ENCODE measurements at regions of chr3 and their contacts with region 1.

Region 1: DNA sequence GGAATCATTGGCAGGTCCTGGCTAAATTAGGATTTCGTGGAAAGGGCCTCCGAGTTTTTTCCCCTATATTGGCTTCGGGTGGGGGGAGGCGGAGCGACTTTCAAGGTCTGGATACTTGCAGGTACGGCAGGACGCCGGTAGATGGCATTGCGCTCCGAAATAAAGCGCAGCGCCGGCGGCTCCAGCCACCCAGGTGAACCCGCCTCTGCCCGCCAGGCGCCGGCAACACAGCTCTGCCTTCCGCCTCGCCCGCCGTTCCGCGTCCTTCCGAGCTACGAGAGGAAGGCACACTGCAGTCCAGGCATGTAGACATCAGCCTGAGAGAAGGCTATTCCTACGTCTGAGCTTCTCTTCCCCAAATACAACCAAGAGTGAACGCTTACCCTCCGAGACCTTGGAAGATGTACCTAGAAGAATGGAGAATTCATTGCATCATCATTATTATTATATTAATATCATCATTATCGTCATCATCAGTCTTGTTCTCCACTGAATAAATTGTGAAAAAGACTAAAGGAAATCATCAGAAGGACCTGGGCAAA is 514.1 kb downstream of the MECOM start:
- DNase-seq: peak; percentile 85
- H3K4me3 ChIP-seq: no peak overlapping the region
- H3K27ac ChIP-seq: no peak overlapping the region
- H3K4me1 ChIP-seq: no peaks in the 10 kb centered on the region
- H3K27me3 ChIP-seq: no peaks in the 10 kb centered on the region
- CTCF ChIP-seq: peak; percentile 50 to 95 (median 90)
- POLR2A ChIP-seq: no peak

Region 2: GRCh38 chr3:169218314-169218983 is 69.0 kb after region 1 on chr3:
- intact Hi-C with region 1: loop called (anchors 10 kb)
- DNase-seq: peak; percentile 8
- H3K4me3 ChIP-seq: no peak overlapping the region
- H3K27ac ChIP-seq: no peak overlapping the region
- H3K4me1 ChIP-seq: no peaks in the 10 kb centered on the region
- H3K27me3 ChIP-seq: no peaks in the 10 kb centered on the region
- CTCF ChIP-seq: peak in 3 of 4 experiments; percentile 23 to 63 (median 57)
- POLR2A ChIP-seq: no peak

Region 3: GRCh38 chr3:169348929-169349613 is 199.7 kb after region 1 on chr3:
- intact Hi-C with region 1: loop called (anchors 2 kb)
- DNase-seq: no peak
- H3K4me3 ChIP-seq: no peak overlapping the region
- H3K27ac ChIP-seq: no peak overlapping the region
- H3K4me1 ChIP-seq: no peaks in the 10 kb centered on the region
- H3K27me3 ChIP-seq: no peaks in the 10 kb centered on the region
- CTCF ChIP-seq: no peak
- POLR2A ChIP-seq: no peak

Region 4: GRCh38 chr3:169542331-169542751 is 392.9 kb after region 1 on chr3:
- intact Hi-C with region 1: no loop called
- DNase-seq: no peak
- H3K4me3 ChIP-seq: no peak overlapping the region
- H3K27ac ChIP-seq: no peak overlapping the region
- H3K4me1 ChIP-seq: peaks cover 3% of the 10 kb centered on the region
- H3K27me3 ChIP-seq: no peaks in the 10 kb centered on the region
- CTCF ChIP-seq: no peak
- POLR2A ChIP-seq: no peak

Region 5: DNA sequence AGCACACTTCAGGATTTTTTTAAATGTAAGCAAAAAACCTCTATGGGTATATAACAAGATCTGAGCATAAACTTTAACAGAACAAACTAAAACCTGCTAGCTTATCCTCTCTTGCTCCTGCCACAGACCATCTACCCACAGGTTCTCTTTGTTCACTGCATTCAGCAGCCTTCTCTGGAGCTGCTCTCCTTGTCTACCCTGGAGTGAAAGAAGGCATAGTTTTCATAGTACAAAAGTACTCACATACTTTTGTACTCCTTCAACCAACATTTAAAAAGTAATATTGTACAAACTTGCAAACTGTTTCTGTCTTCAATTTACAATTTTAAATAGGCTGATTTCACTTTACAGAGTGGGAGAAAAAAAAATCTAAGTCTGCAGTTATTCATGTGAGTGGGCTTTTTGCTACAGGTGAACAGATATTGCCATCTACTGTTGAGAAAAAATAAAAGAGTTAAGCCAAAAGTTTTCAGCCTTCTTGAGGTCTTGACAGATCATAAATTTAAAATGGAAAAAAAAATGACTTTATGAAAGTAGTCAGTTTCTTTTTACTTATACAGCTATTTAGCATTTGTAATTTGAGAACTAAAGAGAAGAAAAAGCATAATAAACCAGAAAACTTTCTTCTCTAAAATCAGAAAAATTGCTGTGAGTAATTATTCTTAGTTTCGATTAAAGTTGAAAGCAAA is 595.1 kb after region 1 on chr3:
- intact Hi-C with region 1: loop called (anchors 5 kb)
- DNase-seq: no peak
- H3K4me3 ChIP-seq: no peak overlapping the region
- H3K27ac ChIP-seq: no peak overlapping the region
- H3K4me1 ChIP-seq: no peaks in the 10 kb centered on the region
- H3K27me3 ChIP-seq: no peaks in the 10 kb centered on the region
- CTCF ChIP-seq: peak in 2 of 4 experiments; percentile 49 to 51
- POLR2A ChIP-seq: no peak